GM10248 (cell line): ENCODE measurements at regions of chr17 and their contacts with region 1.

Region 1: DNA sequence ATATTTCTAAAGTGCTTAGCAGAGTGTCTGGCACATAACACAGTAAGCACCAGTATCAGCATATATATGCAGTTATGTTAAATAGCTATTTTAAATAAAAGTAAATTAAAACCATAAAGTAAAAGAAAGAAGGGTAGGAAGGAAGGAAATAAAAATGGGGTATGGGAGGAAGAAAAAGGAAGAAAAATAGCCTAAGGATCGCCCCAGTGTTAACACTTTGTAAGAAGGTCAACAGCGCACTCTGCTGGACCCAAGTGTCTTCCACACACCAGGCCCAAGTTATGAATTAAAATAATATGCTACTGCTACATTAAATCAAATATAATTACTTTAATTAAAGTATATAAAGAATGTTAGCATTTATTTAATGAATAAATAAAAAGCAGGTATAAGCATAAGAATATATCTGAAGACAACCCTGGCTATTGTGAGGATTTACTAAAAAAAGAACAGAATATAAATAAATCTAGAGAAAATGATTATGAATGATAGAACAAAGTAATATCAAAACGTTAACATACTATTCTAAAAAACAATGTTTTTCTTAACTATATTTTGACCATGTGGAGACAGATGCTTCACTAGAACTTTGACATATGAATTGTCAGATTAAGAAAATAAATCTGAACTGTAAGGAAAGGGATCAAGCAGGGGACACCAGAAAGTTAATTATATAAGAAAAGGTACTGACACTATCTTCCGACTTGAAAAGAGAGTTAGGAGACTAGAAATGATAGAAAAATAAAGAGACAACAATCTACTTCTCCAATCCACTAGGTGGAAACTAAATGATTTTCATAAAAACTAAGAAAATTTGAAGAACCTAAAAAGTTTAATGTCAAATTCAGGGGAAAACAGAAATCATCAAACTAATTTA is 25.9 kb downstream of the BRIP1 start:
- DNase-seq: peak; percentile 41
- CTCF ChIP-seq: peak; percentile 70

Region 2: DNA sequence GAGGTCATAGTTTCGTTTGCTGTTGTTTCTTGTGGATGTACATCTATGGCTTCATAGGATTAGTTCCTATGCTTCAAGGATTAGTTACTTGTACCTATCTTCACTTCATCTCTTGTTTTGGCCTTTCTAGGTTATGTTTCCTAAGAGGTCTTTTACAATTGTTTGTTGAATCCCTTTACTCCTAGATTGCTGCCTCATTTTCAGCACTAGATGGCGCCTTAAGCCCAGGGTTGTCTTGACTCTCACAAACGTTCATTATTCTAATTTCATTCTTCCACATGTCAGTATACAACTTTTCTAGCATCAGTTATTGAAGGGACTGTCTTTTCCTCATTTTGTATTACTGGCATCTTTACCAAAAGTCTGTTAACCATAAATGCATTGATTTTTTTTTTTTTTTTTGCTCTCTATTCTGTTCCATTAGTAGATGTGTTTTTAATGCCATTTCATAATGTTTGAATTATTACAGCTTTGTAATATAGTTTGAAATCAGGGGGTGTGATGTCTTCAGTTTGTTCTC is 201.4 kb before region 1 on chr17:
- CTCF ChIA-PET with region 1: interaction called, 20 read pairs
- POLR2A ChIA-PET with region 1: no interaction called
- DNase-seq: peak; percentile 22
- CTCF ChIP-seq: peak; percentile 71

Region 3: DNA sequence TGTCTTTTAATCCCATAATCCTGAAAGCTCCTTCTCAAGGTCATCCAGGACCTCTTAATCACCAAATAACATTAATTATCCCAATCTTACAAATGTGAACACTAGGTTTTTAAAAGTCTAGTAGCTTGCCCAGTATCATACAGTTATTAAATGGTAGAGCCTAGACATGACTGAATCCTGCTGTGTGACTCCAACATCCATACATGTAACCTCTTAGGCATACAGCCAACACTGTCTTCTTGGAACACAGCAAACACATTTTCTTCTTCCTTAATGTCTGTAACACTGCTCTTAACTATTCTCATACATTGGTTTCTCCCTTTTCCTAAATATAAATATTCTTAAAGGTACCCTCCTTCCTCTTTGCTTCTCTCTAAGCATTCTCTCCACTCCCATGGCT is 12.3 kb after region 1 on chr17:
- CTCF ChIA-PET with region 1: interaction called, 10 read pairs
- POLR2A ChIA-PET with region 1: no interaction called
- DNase-seq: no peak
- CTCF ChIP-seq: no peak

Region 4: GRCh38 chr17:62024894-62025293 is 187.5 kb after region 1 on chr17:
- CTCF ChIA-PET with region 1: no interaction called
- POLR2A ChIA-PET with region 1: no interaction called
- DNase-seq: no peak
- CTCF ChIP-seq: no peak